Colonic mucosa (tissue), 4 donors: ENCODE measurements at regions of chr6 and their contacts with region 1.

Region 1: GRCh38 chr6:10747251-10747972 is at the start of gene TMEM14B:
- DNase-seq: peak; percentile 100
- H3K4me3 ChIP-seq: peak within 1 kb of the TSS; percentile 60
- H3K27ac ChIP-seq: peak within 1 kb of the TSS; percentile 80
- H3K4me1 ChIP-seq: peaks cover 12% of the 10 kb centered on the region
- H3K27me3 ChIP-seq: no peaks in the 10 kb centered on the region
- CTCF ChIP-seq: no peak
- total RNA-seq, gene TMEM14B: 58.7 to 73.3 TPM

Region 2: GRCh38 chr6:10694302-10695085 is 52.9 kb before region 1 on chr6 and contains the starts of genes C6orf52 and PAK1IP1:
- intact Hi-C with region 1: loop called (anchors 10 kb)
- DNase-seq: peak; percentile 94
- H3K4me3 ChIP-seq: peak within 1 kb of the TSS; percentile 56
- H3K27ac ChIP-seq: peak within 1 kb of the TSS; percentile 83
- H3K4me1 ChIP-seq: peaks cover 3% of the 10 kb centered on the region
- H3K27me3 ChIP-seq: no peaks in the 10 kb centered on the region
- CTCF ChIP-seq: no peak
- total RNA-seq, gene C6orf52: 0.69 to 0.99 TPM
- total RNA-seq, gene PAK1IP1: 6.6 to 16.3 TPM

Region 3: DNA sequence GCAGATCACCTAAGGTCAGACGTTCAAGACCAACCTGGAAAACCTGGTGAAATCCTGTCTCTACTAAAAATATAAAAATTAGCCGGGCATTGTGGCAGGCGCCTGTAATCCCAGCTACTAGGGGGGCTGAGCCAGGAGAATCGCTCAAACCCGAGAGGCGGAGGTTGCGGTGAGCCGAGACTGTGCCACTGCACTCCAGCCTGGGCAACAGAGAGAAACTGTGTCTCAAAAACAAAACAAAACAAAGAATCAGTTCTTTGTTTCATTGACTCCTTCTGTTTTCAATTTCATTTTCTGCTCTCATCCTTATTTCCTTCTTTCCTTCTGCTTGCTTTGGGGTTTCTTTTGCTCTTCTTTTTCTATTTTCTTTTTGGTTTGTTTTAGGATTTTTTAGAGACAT is 33.5 kb before region 1 on chr6:
- intact Hi-C with region 1: no loop called
- DNase-seq: no peak
- H3K4me3 ChIP-seq: no peak overlapping the region
- H3K27ac ChIP-seq: no peak overlapping the region
- H3K4me1 ChIP-seq: no peaks in the 10 kb centered on the region
- H3K27me3 ChIP-seq: no peaks in the 10 kb centered on the region
- CTCF ChIP-seq: no peak

Region 4: GRCh38 chr6:11353921-11354389 is 606.5 kb after region 1 on chr6:
- intact Hi-C with region 1: no loop called
- DNase-seq: no peak
- H3K4me3 ChIP-seq: no peak overlapping the region
- H3K27ac ChIP-seq: peak overlapping the region; percentile 34
- H3K4me1 ChIP-seq: peaks cover 12% of the 10 kb centered on the region
- H3K27me3 ChIP-seq: no peaks in the 10 kb centered on the region
- CTCF ChIP-seq: no peak